Activated T-helper 2 cell treated with anti-CD3 and anti-CD28 coated beads, Interferon-gamma antibody, Interleukin-2, Interleukin-4, amounts not matched to agents 10 μg/mL and 5 μg/mL and 100 μg/mL, durations not matched to agents 14 hours and 24 hours and 36 hours (primary cell): ENCODE measurements at regions of chr6 and their contacts with region 1.

Region 1: DNA sequence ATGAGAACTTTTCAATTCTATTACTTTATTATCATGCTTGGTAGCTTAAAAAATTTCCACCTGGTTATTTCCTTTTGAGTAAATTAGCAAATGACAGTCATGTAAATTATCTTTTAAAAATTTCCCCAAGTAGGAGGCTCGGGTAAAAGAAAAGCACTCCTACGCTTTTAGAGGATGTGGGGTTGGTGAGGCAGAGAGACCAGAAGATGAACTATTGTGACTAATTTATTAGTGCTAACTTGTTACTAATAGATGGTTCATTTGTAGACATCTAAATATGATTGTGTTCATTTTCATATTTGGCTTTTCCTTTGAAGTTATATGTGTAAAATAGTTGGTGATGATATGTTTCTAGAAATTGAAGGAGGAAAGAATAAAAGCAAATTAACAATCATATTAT is 27.0 kb downstream of the ZNF292 start:
- DNase-seq: no peak
- H3K4me3 Mint-ChIP-seq: peak overlapping the region; percentile 33
- H3K27ac Mint-ChIP-seq: peak overlapping the region; percentile 89
- H3K4me1 Mint-ChIP-seq: peaks cover 55% of the 10 kb centered on the region
- H3K27me3 Mint-ChIP-seq: no peaks in the 10 kb centered on the region

Region 2: GRCh38 chr6:87012035-87012434 is 170.3 kb before region 1 on chr6:
- intact Hi-C with region 1: no loop called
- DNase-seq: no peak
- H3K4me3 Mint-ChIP-seq: no peak overlapping the region
- H3K27ac Mint-ChIP-seq: no peak overlapping the region
- H3K4me1 Mint-ChIP-seq: no peaks in the 10 kb centered on the region
- H3K27me3 Mint-ChIP-seq: no peaks in the 10 kb centered on the region

Region 3: DNA sequence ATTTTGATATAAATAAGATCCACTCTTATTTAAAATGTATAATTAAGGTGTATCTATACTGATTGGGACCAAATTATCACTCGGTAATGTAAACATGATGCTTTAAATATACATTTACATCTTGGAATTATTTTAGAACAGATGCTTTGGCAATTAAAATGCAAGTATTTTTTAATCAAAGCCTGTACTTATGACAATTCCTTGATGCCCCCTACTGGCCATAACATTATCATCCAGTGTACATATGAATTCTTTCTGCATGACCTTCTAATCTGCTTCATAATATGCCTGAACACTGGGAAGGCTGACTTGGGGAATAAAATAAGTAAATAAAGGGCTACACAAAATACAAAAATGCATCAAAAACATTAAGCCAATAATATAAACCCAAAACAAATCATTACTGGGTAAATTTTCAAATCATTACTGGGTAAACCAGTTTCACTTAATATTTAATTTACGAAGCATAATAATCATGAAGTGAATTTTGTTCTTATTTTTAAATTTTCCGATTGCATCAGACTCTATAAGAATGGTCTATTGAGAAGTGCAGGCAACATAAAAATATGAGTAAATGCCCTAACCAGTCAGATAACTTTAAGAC is 152.5 kb before region 1 on chr6:
- intact Hi-C with region 1: no loop called
- DNase-seq: no peak
- H3K4me3 Mint-ChIP-seq: no peak overlapping the region
- H3K27ac Mint-ChIP-seq: no peak overlapping the region
- H3K4me1 Mint-ChIP-seq: no peaks in the 10 kb centered on the region
- H3K27me3 Mint-ChIP-seq: peaks cover 5% of the 10 kb centered on the region

Region 4: GRCh38 chr6:87102151-87102621 is 80.1 kb before region 1 on chr6:
- intact Hi-C with region 1: loop called (anchors 2 kb)
- DNase-seq: no peak
- H3K4me3 Mint-ChIP-seq: no peak overlapping the region
- H3K27ac Mint-ChIP-seq: no peak overlapping the region
- H3K4me1 Mint-ChIP-seq: peaks cover 5% of the 10 kb centered on the region
- H3K27me3 Mint-ChIP-seq: peaks cover 39% of the 10 kb centered on the region

Region 5: DNA sequence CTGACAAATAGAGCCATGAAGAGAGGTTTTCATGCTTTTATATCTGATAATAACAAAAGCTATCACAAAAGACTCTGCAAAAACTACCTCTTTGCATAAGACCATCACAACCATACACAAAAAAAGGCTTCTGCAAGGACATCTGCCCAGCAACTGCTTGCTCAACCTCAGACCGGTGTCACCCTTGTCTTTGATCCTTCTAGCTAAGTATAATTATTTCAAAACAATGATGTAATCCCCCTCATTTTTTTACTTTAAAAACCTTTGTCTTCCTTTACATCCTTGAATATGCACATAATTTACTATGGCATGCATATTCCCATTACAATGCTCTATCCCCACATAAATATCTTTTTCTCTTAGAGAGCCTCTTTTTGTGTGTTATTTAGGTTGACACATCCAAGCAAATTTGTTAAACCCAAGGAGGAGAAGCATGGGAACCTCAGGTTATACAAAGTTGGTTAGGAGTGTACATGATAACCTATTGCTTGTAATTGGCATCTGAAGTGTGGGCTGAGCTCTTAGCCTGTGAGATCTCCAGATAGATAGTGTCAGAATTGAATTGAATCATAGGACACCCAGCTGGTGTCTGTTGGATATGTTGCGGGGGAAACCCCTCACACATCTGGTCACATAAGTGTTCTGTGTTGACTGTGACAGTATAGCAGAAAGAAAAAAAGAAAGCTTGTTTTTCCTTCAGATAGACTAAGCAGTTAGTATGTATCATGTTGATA is 66.8 kb before region 1 on chr6:
- intact Hi-C with region 1: no loop called
- DNase-seq: no peak
- H3K4me3 Mint-ChIP-seq: no peak overlapping the region
- H3K27ac Mint-ChIP-seq: no peak overlapping the region
- H3K4me1 Mint-ChIP-seq: peaks cover 7% of the 10 kb centered on the region
- H3K27me3 Mint-ChIP-seq: peaks cover 54% of the 10 kb centered on the region